Tibial artery (tissue), 4 donors: ENCODE measurements at regions of chr7 and their contacts with region 1.

Region 1: GRCh38 chr7:154919344-154920225 is 83.3 kb downstream of the PAXIP1 start:
- DNase-seq: no peak
- H3K4me3 ChIP-seq: no peak overlapping the region
- H3K27ac ChIP-seq: no peak overlapping the region
- H3K4me1 ChIP-seq: peaks cover 0 to 3% (median 0%) of the 10 kb centered on the region in 4 donors
- H3K27me3 ChIP-seq: peaks cover 0 to 24% of the 10 kb centered on the region in 2 donors
- CTCF ChIP-seq: no peak

Region 2: GRCh38 chr7:155190688-155191087 is 271.1 kb after region 1 on chr7:
- intact Hi-C with region 1: loop called (anchors 5 kb)
- DNase-seq: no peak
- H3K4me3 ChIP-seq: no peak overlapping the region
- H3K27ac ChIP-seq: no peak overlapping the region
- H3K4me1 ChIP-seq: peaks cover 0 to 6% (median 2%) of the 10 kb centered on the region in 4 donors
- H3K27me3 ChIP-seq: peaks cover 0 to 28% of the 10 kb centered on the region in 2 donors
- CTCF ChIP-seq: peak; percentile 85 to 89